Activated naive CD4-positive, alpha-beta T cell treated with anti-CD3 and anti-CD28 coated beads for 36 hours (primary cell): ENCODE measurements at regions of chr16 and their contacts with region 1.

Region 1: GRCh38 chr16:48231727-48232492 is 12.2 kb upstream of the LONP2 start:
- DNase-seq: peak; percentile 73
- H3K4me3 Mint-ChIP-seq: no peak overlapping the region
- H3K27ac Mint-ChIP-seq: peak overlapping the region; percentile 50
- H3K4me1 Mint-ChIP-seq: peaks cover 21% of the 10 kb centered on the region
- H3K27me3 Mint-ChIP-seq: peaks cover 2% of the 10 kb centered on the region

Region 2: GRCh38 chr16:48244080-48244862 is 12.4 kb after region 1 on chr16 and contains the start of gene LONP2:
- CTCF ChIA-PET with region 1: interaction called, 3 read pairs
- intact Hi-C with region 1: loop called (anchors 1 kb)
- DNase-seq: peak; percentile 96
- H3K4me3 Mint-ChIP-seq: peak within 1 kb of the TSS; percentile 88
- H3K27ac Mint-ChIP-seq: peak within 1 kb of the TSS; percentile 79
- H3K4me1 Mint-ChIP-seq: peaks cover 38% of the 10 kb centered on the region
- H3K27me3 Mint-ChIP-seq: no peaks in the 10 kb centered on the region
- total RNA-seq, gene LONP2: 49.9 to 53.9 TPM

Region 3: GRCh38 chr16:48318630-48319029 is 86.7 kb after region 1 on chr16:
- CTCF ChIA-PET with region 1: no interaction called
- intact Hi-C with region 1: loop called (anchors 5 kb)
- DNase-seq: peak; percentile 45
- H3K4me3 Mint-ChIP-seq: no peak overlapping the region
- H3K27ac Mint-ChIP-seq: peak overlapping the region; percentile 60
- H3K4me1 Mint-ChIP-seq: peaks cover 47% of the 10 kb centered on the region
- H3K27me3 Mint-ChIP-seq: no peaks in the 10 kb centered on the region

Region 4: GRCh38 chr16:48526058-48526957 is 294.4 kb after region 1 on chr16:
- CTCF ChIA-PET with region 1: interaction called, 3 read pairs
- intact Hi-C with region 1: loop called (anchors 1 kb)
- DNase-seq: peak; percentile 74
- H3K4me3 Mint-ChIP-seq: no peak overlapping the region
- H3K27ac Mint-ChIP-seq: no peak overlapping the region
- H3K4me1 Mint-ChIP-seq: no peaks in the 10 kb centered on the region
- H3K27me3 Mint-ChIP-seq: no peaks in the 10 kb centered on the region